ENCODE measurements at regions of chr22 and their contacts with region 1.

Region 1: GRCh38 chr22:35409783-35410662 is 10.1 kb downstream of the MCM5 start:
- DNase-seq: peak; percentile 91
- ATAC-seq: peak; percentile 91
- H3K4me3 ChIP-seq: peak overlapping the region; percentile 45; the same call in 1 of the 2 replicates
- H3K27ac ChIP-seq: peak overlapping the region; percentile 83
- H3K4me1 ChIP-seq: peaks cover 27% of the 10 kb centered on the region
- H3K27me3 ChIP-seq: no peaks in the 10 kb centered on the region
- CTCF ChIP-seq: no peak
- EP300 ChIP-seq: peak; percentile 53 to 76; a peak in 3 of 4 replicates
- POLR2A ChIP-seq: peak; percentile 65
- RAD21 ChIP-seq: peak; percentile 22; the same call in 1 of the 2 replicates

Region 2: GRCh38 chr22:35357883-35358621 is 52.0 kb before region 1 on chr22:
- CTCF ChIA-PET with region 1: interaction called, 78 read pairs
- POLR2A ChIA-PET with region 1: interaction called, 18 read pairs
- RAD21 ChIA-PET with region 1: interaction called, 112 read pairs
- SMC1A ChIA-PET with region 1: interaction called, 67 read pairs
- in situ Hi-C with region 1: no loop called
- intact Hi-C with region 1: no loop called
- DNase-seq: no peak
- ATAC-seq: peak; percentile 17
- H3K4me3 ChIP-seq: no peak overlapping the region
- H3K27ac ChIP-seq: no peak overlapping the region
- H3K4me1 ChIP-seq: peaks cover 23% of the 10 kb centered on the region
- H3K27me3 ChIP-seq: no peaks in the 10 kb centered on the region
- CTCF ChIP-seq: no peak
- EP300 ChIP-seq: no peak
- POLR2A ChIP-seq: no peak
- RAD21 ChIP-seq: no peak

Region 3: DNA sequence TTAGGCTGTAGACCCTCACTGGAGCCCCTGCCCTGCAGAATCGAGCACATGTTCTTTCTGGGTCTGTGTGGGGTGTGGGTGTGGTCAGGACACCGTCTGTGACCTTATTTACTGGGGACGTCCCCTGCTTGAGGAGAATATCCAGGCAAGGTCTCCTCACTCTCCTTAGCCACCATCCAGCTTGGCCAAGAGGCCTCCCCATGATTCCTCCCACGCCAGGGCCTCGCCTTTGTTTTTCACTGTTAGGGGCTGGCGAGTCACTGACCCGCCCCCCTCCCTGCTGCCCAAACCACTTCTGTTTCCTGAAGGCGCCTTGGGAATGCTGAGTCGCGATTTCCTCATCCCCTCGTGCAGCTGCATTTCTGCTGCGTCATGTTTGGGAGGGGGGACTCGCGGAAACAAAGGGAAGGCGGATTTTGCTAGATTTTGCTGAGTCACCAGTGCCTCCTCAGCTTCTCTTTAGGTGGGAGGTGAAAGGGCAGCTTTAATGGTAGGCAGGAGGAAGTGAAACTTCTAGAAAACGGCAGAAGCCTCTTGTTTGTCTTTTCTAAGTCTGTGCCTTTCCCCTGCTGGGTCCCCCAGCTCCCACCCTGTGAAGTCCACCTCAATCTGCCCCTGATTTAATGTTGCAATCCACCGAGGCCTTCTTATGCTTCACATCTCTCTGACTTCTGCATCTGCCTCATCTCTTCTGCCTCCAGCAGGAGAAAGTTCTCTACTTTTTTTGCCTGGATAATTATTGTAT is 33.1 kb before region 1 on chr22:
- CTCF ChIA-PET with region 1: interaction called, 36 read pairs
- POLR2A ChIA-PET with region 1: interaction called, 20 read pairs
- RAD21 ChIA-PET with region 1: interaction called, 39 read pairs
- SMC1A ChIA-PET with region 1: interaction called, 22 read pairs
- in situ Hi-C with region 1: no loop called
- intact Hi-C with region 1: loop called (anchors 2 kb)
- DNase-seq: peak; percentile 87
- ATAC-seq: peak; percentile 74
- H3K4me3 ChIP-seq: no peak overlapping the region; the same call in 1 of the 2 replicates
- H3K27ac ChIP-seq: peak overlapping the region; percentile 81
- H3K4me1 ChIP-seq: peaks cover 37% of the 10 kb centered on the region
- H3K27me3 ChIP-seq: no peaks in the 10 kb centered on the region
- CTCF ChIP-seq: no peak
- EP300 ChIP-seq: peak; percentile 85 to 88
- POLR2A ChIP-seq: no peak
- RAD21 ChIP-seq: 0 out of 2 replicates have a peak, but pooled peaks have one; percentile 0

Region 4: DNA sequence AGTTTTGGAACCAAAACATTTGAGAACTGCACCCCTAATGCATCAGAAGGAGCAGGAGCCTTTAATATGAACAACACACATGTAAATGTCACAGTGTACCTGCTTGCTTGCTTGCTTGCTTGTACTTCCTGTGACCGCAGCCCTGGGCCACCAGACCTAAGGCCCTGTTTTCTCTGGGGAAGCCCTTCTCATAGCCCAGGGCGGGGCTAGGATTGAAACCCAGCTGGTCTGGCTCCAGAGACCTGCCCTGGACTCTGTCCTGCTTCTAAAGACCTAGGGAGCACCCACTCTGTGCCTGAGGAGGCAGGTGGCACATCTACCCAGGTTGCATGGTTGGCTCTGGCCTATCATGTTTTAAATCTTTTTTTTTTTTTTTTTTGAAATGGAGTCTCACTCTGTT is 17.7 kb before region 1 on chr22:
- CTCF ChIA-PET with region 1: interaction called, 26 read pairs
- POLR2A ChIA-PET with region 1: interaction called, 46 read pairs
- RAD21 ChIA-PET with region 1: interaction called, 29 read pairs
- SMC1A ChIA-PET with region 1: interaction called, 79 read pairs
- in situ Hi-C with region 1: no loop called
- intact Hi-C with region 1: no loop called
- DNase-seq: no peak
- ATAC-seq: peak; percentile 74
- H3K4me3 ChIP-seq: no peak overlapping the region
- H3K27ac ChIP-seq: no peak overlapping the region
- H3K4me1 ChIP-seq: peaks cover 16% of the 10 kb centered on the region
- H3K27me3 ChIP-seq: no peaks in the 10 kb centered on the region
- CTCF ChIP-seq: no peak
- EP300 ChIP-seq: no peak
- POLR2A ChIP-seq: no peak
- RAD21 ChIP-seq: no peak

Region 5: DNA sequence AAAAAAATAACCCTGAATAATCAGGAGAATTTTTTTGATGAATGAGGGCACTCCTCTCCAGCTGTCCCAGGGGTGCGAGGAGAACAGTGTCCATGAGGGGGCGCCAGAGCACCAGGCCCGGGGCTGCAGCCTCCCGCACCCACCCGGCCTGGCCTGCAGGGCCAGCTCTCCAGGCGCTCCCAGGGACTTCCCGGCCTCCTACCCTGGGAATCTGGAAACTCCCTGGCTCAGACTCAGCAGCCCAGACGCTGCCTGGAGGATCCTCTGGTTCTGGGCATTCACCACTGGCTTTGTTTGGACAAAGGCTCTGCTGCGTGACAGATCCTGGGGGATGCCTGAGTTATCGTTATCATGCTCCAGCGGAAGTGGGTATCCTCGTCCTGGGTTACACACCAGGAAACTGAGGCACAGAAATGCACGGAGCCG is 20.9 kb after region 1 on chr22:
- CTCF ChIA-PET with region 1: interaction called, 16 read pairs
- POLR2A ChIA-PET with region 1: interaction called, 3 read pairs
- RAD21 ChIA-PET with region 1: interaction called, 4 read pairs
- SMC1A ChIA-PET with region 1: no interaction called
- in situ Hi-C with region 1: no loop called
- intact Hi-C with region 1: no loop called
- DNase-seq: no peak
- ATAC-seq: peak; percentile 79
- H3K4me3 ChIP-seq: no peak overlapping the region
- H3K27ac ChIP-seq: no peak overlapping the region
- H3K4me1 ChIP-seq: no peaks in the 10 kb centered on the region
- H3K27me3 ChIP-seq: no peaks in the 10 kb centered on the region
- CTCF ChIP-seq: peak; percentile 60 to 73 (median 69)
- EP300 ChIP-seq: no peak
- POLR2A ChIP-seq: no peak
- RAD21 ChIP-seq: peak; percentile 55

Measured in GM12878 (cell line).